ENCODE measurements at regions of chr10 and their contacts with region 1.

Region 1: GRCh38 chr10:5446390-5446926 is 34.1 kb downstream of the NET1 start:
- DNase-seq: peak; percentile 97
- H3K4me3 ChIP-seq: peak overlapping the region; percentile 40 to 75 (median 50)
- H3K27ac ChIP-seq: peak overlapping the region; percentile 84 to 94 (median 90)
- H3K4me1 ChIP-seq: peaks cover 14 to 56% (median 48%) of the 10 kb centered on the region in 4 donors
- H3K27me3 ChIP-seq: no peaks in the 10 kb centered on the region
- CTCF ChIP-seq: no peak
- EP300 ChIP-seq: no peak
- POLR2A ChIP-seq: peak; percentile 99

Region 2: DNA sequence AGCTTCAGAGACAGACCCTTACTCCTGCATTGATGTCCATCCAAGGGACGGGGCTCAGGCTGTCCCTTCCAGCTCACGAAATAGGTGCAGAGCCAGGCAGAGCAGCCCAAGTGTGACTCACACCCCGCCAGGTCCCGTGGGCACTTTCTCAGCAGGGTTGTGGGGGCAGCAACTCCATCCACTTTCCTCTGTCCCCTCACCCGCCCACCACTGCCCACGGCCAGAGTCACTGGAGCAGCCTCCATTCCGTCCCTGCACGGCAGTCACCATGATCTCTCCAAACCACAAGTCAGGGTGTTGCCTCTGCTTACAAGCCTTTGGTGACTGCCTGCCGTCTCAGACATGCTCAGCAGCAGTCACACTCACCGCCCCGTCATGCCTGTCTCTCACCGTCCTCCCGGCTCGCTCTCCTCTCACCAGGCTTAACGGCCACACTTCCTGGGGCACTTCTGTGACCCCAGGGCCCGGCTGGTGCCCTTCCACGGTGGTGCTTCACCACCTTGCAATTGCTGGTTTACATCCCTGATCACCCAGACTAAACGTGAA is 117.6 kb after region 1 on chr10:
- in situ Hi-C with region 1: no loop called
- intact Hi-C with region 1: loop called (anchors 10 kb)
- DNase-seq: peak; percentile 3
- H3K4me3 ChIP-seq: no peak overlapping the region
- H3K27ac ChIP-seq: peak overlapping the region; percentile 23 to 64 (median 40)
- H3K4me1 ChIP-seq: peaks cover 0 to 5% (median 3%) of the 10 kb centered on the region in 4 donors
- H3K27me3 ChIP-seq: no peaks in the 10 kb centered on the region
- CTCF ChIP-seq: no peak
- EP300 ChIP-seq: no peak
- POLR2A ChIP-seq: no peak

Region 3: GRCh38 chr10:5623081-5623748 is 176.8 kb after region 1 on chr10:
- in situ Hi-C with region 1: loop called (anchors 5 to 10 kb)
- intact Hi-C with region 1: loop called (anchors 2 kb)
- DNase-seq: peak; percentile 95
- H3K4me3 ChIP-seq: no peak overlapping the region
- H3K27ac ChIP-seq: peak overlapping the region; percentile 37 to 67 (median 56)
- H3K4me1 ChIP-seq: peaks cover 7 to 25% (median 15%) of the 10 kb centered on the region in 4 donors
- H3K27me3 ChIP-seq: no peaks in the 10 kb centered on the region
- CTCF ChIP-seq: peak; percentile 88 to 97 (median 94)
- EP300 ChIP-seq: no peak
- POLR2A ChIP-seq: no peak

Region 4: GRCh38 chr10:5629303-5630111 is 183.0 kb after region 1 on chr10:
- in situ Hi-C with region 1: loop called (anchors 5 to 10 kb)
- intact Hi-C with region 1: no loop called
- DNase-seq: peak; percentile 89
- H3K4me3 ChIP-seq: no peak overlapping the region
- H3K27ac ChIP-seq: peak overlapping the region; percentile 50 to 79 (median 68)
- H3K4me1 ChIP-seq: peaks cover 0 to 43% (median 22%) of the 10 kb centered on the region in 4 donors
- H3K27me3 ChIP-seq: no peaks in the 10 kb centered on the region
- CTCF ChIP-seq: peak; percentile 83 to 92 (median 90)
- EP300 ChIP-seq: no peak
- POLR2A ChIP-seq: no peak

Region 5: DNA sequence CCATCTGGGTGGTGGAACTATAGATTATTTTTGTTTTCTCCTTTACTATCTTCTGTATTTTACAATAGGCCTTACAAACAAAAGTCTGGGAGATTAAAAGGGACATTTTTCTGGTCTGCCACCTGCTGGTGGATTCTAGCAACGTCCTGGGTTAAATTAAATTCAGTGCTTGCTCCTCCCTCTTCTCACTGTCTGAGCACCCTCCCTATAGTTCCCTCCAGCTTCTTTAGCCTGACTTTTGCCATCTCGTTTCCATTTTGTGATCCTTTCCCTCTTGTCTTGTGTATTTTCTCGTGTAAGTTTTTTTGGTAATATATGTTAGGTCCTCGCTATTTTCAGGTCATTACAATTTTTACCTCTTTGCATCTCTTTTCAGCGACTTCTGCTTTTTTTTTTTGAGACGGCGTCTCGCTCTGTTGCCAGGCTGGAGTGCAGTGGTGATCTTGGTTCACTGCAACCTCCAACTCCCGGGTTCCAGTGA is 427.1 kb after region 1 on chr10:
- in situ Hi-C with region 1: loop called in 2 of 4 experiments (anchors 25 kb)
- intact Hi-C with region 1: loop called (anchors 10 kb)
- DNase-seq: peak; percentile 76
- H3K4me3 ChIP-seq: no peak overlapping the region
- H3K27ac ChIP-seq: no peak overlapping the region
- H3K4me1 ChIP-seq: peaks cover 0 to 6% (median 0%) of the 10 kb centered on the region in 4 donors
- H3K27me3 ChIP-seq: no peaks in the 10 kb centered on the region
- CTCF ChIP-seq: peak; percentile 73 to 83 (median 79)
- EP300 ChIP-seq: no peak
- POLR2A ChIP-seq: no peak

Measured in transverse colon (tissue), 4 donors.